Calu3 (cell line): ENCODE measurements at regions of chrX and their contacts with region 1.

Region 1: GRCh38 chrX:18886344-18887161 is 97.4 kb downstream of the PHKA2 start:
- DNase-seq: peak; percentile 80
- H3K4me3 Mint-ChIP-seq: peak overlapping the region; percentile 76
- H3K27ac Mint-ChIP-seq: peak overlapping the region; percentile 96
- H3K4me1 Mint-ChIP-seq: peaks cover 27% of the 10 kb centered on the region
- H3K27me3 Mint-ChIP-seq: no peaks in the 10 kb centered on the region
- CTCF ChIP-seq: peak; percentile 54

Region 2: DNA sequence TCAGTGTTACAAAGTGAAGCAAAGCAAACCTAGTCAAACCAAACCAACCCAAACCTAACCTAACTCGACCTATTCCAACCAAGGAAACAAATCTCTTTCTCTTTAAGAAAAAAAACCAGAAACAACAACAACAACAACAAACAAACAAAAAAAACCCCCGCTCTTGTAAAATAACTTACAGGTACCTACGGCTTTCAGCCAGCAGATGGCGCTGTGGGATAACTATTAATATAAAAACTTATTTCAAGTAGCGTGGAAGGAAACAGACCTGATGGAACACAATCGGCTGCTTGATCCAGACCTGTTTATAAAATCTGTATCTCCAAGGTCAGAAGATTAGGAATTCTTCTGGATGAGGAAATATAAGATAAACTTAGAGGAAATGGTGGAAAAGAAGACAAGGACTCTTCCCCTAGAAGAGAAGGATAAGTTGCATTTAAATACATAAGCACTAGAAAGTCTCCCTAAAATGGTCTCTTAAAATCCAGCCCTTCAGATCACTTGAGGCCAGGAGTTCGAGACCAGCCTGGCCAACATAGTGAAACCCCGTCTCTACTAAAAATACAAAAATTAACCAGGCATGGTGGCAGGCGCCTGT is 495.5 kb before region 1 on chrX:
- CTCF ChIA-PET with region 1: interaction called, 3 read pairs
- intact Hi-C with region 1: loop called (anchors 2 kb)
- DNase-seq: peak; percentile 45
- H3K4me3 Mint-ChIP-seq: no peak overlapping the region
- H3K27ac Mint-ChIP-seq: no peak overlapping the region
- H3K4me1 Mint-ChIP-seq: peaks cover 10% of the 10 kb centered on the region
- H3K27me3 Mint-ChIP-seq: no peaks in the 10 kb centered on the region
- CTCF ChIP-seq: peak; percentile 15

Region 3: GRCh38 chrX:18410043-18410442 is 476.5 kb before region 1 on chrX:
- CTCF ChIA-PET with region 1: interaction called, 11 read pairs
- intact Hi-C with region 1: loop called (anchors 5 kb)
- DNase-seq: no peak
- H3K4me3 Mint-ChIP-seq: no peak overlapping the region
- H3K27ac Mint-ChIP-seq: no peak overlapping the region
- H3K4me1 Mint-ChIP-seq: no peaks in the 10 kb centered on the region
- H3K27me3 Mint-ChIP-seq: no peaks in the 10 kb centered on the region
- CTCF ChIP-seq: no peak

Region 4: GRCh38 chrX:18617407-18617750 is 269.2 kb before region 1 on chrX:
- CTCF ChIA-PET with region 1: no interaction called
- intact Hi-C with region 1: loop called (anchors 5 kb)
- DNase-seq: peak; percentile 67
- H3K4me3 Mint-ChIP-seq: peak overlapping the region; percentile 55
- H3K27ac Mint-ChIP-seq: peak overlapping the region; percentile 91
- H3K4me1 Mint-ChIP-seq: peaks cover 29% of the 10 kb centered on the region
- H3K27me3 Mint-ChIP-seq: no peaks in the 10 kb centered on the region
- CTCF ChIP-seq: no peak